Endothelial cell of umbilical vein (primary cell): ENCODE measurements at regions of chr15 and their contacts with region 1.

Region 1: GRCh38 chr15:45705510-45706473 is 71.0 kb downstream of the SQOR start:
- DNase-seq: peak; percentile 90
- H3K4me3 ChIP-seq: peak overlapping the region; percentile 42 to 78 (median 51)
- H3K27ac ChIP-seq: no peak overlapping the region
- H3K4me1 ChIP-seq: peaks cover 4% of the 10 kb centered on the region
- H3K27me3 ChIP-seq: no peaks in the 10 kb centered on the region
- CTCF ChIP-seq: peak; percentile 83 to 87
- POLR2A ChIP-seq: no peak

Region 2: GRCh38 chr15:45268135-45268534 is 437.7 kb before region 1 on chr15:
- CTCF ChIA-PET with region 1: no interaction called
- POLR2A ChIA-PET with region 1: no interaction called
- dilution Hi-C with region 1: no loop called
- intact Hi-C with region 1: no loop called
- DNase-seq: no peak
- H3K4me3 ChIP-seq: no peak overlapping the region
- H3K27ac ChIP-seq: no peak overlapping the region
- H3K4me1 ChIP-seq: no peaks in the 10 kb centered on the region
- H3K27me3 ChIP-seq: no peaks in the 10 kb centered on the region
- CTCF ChIP-seq: peak in 1 of 2 donors; percentile 2
- POLR2A ChIP-seq: no peak

Region 3: DNA sequence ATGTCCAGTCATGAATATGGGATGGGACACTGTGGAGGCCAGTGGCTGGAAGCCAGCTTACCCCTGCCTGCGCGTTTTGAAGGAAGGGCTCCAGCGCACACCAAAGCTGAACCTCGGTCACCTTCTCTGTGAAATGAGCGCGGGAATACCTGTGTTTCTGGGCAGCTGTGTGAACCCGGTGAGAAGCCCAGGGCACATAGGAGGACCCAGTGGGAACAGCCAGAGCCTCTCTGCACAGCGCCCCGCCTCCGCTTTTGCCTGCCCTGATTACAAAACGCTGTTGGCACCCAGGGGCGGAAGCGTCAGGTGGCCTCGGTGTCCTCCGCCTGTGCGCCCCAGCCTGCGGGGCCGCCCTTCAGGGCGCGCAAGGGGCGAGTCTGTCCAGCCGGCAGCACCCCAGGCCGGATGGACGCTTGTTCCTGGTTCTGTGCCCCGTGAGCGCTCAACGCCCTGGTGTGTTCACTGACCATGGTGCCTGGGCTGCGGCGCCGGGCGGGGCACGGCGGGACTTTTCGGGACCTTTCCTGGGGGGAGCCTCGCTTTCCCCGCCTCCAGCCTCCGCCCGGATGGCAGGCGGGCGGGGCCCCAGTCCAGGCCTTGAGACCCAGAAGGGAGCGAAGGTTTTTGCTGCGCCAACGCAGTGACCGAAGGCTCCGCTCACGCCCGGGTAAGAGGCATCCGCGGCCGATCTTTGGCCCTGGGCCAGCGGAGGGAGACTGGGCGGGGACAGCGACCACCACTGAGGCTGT is 71.2 kb before region 1 on chr15 and contains the start of gene SQOR:
- CTCF ChIA-PET with region 1: interaction called, 12 read pairs
- POLR2A ChIA-PET with region 1: no interaction called
- dilution Hi-C with region 1: no loop called
- intact Hi-C with region 1: loop called (anchors 1 kb)
- DNase-seq: peak; percentile 77
- H3K4me3 ChIP-seq: peak within 1 kb of the TSS; percentile 52 to 88 (median 82)
- H3K27ac ChIP-seq: no peak within 1 kb of the TSS
- H3K4me1 ChIP-seq: peaks cover 20% of the 10 kb centered on the region
- H3K27me3 ChIP-seq: no peaks in the 10 kb centered on the region
- CTCF ChIP-seq: no peak
- POLR2A ChIP-seq: peak; percentile 68
- total RNA-seq, gene SQOR: 6.6 and 17.9 TPM in 2 replicates

Region 4: DNA sequence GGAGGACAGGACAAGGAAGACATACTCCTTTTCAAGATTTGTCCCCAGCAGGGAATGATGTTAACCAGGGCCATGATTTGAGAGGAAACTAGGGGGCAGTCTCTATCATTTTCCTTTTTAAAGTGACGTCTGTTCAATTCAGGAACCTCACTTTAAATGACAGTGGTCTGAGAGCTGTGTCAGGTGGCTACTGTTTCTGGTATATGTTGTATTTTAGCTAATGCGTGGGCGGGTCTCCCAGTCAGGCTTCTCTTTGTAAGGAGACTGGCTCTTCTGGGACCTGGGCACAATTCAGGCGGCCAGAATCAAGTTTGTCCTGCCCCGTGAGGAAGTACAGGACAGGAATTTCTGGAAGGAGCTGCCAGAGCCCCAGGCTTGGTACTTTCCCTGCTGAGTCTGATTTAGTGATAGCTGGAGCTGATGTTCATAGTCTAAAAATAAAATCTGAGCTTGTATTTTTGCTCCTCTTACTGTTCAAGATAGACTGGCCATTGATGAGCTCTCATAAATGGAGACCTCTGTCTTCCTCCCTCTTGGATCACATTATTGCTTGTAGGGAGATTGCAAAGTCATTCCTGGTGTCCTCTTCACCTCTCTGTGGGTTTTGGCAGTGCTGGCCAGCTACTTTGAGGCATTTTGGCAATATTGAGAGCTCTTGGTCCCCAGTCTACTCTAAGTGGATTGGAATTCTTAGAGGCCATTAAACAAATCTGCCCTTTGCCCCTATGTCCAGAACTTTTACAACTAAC is 45.4 kb before region 1 on chr15:
- CTCF ChIA-PET with region 1: interaction called, 10 read pairs
- POLR2A ChIA-PET with region 1: no interaction called
- dilution Hi-C with region 1: no loop called
- intact Hi-C with region 1: no loop called
- DNase-seq: no peak
- H3K4me3 ChIP-seq: no peak overlapping the region
- H3K27ac ChIP-seq: no peak overlapping the region
- H3K4me1 ChIP-seq: no peaks in the 10 kb centered on the region
- H3K27me3 ChIP-seq: no peaks in the 10 kb centered on the region
- CTCF ChIP-seq: no peak
- POLR2A ChIP-seq: no peak

Region 5: DNA sequence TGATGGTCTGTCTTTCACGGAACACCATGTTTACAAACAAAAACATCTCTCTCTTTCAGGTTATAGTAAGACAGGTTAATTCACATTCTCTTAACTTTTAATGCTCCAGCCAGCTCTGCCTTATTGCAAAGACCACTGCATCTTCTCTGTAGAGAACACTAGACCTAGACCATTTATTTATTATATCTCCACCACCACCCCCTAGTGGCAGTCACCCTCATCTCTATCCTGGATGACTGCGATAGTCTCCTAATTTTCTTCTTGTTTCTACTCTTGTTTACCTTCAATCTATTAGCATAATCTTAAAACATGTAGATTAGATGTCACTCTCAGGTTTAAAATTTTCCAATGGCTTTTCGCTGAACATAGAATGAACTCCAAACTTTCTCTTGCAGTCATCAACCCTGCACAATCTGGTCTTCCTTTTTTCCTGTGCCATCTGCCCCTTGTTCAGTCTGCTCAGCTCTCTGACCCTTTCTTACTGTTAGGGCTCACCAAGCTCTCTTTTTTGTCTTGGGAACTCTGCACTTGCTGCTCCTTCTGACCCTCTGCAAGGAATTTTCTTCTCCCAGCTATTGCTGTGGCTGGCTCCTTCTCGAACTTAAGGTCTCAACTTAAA is 84.6 kb after region 1 on chr15:
- CTCF ChIA-PET with region 1: interaction called, 45 read pairs
- POLR2A ChIA-PET with region 1: no interaction called
- dilution Hi-C with region 1: no loop called
- intact Hi-C with region 1: loop called (anchors 2 kb)
- DNase-seq: peak; percentile 25
- H3K4me3 ChIP-seq: no peak overlapping the region
- H3K27ac ChIP-seq: no peak overlapping the region
- H3K4me1 ChIP-seq: no peaks in the 10 kb centered on the region
- H3K27me3 ChIP-seq: peaks cover 10 to 12% of the 10 kb centered on the region in 2 experiments
- CTCF ChIP-seq: peak; percentile 31 to 48
- POLR2A ChIP-seq: no peak

Region 6: GRCh38 chr15:45970542-45970941 is 264.8 kb after region 1 on chr15:
- CTCF ChIA-PET with region 1: no interaction called
- POLR2A ChIA-PET with region 1: no interaction called
- dilution Hi-C with region 1: no loop called
- intact Hi-C with region 1: no loop called
- DNase-seq: no peak
- H3K4me3 ChIP-seq: no peak overlapping the region
- H3K27ac ChIP-seq: no peak overlapping the region
- H3K4me1 ChIP-seq: no peaks in the 10 kb centered on the region
- H3K27me3 ChIP-seq: no peaks in the 10 kb centered on the region
- CTCF ChIP-seq: no peak
- POLR2A ChIP-seq: no peak

Region 7: GRCh38 chr15:46091860-46092450 is 386.2 kb after region 1 on chr15:
- CTCF ChIA-PET with region 1: interaction called, 12 read pairs
- POLR2A ChIA-PET with region 1: no interaction called
- dilution Hi-C with region 1: no loop called
- intact Hi-C with region 1: loop called (anchors 2 kb)
- DNase-seq: peak; percentile 30
- H3K4me3 ChIP-seq: no peak overlapping the region
- H3K27ac ChIP-seq: no peak overlapping the region
- H3K4me1 ChIP-seq: peaks cover 38% of the 10 kb centered on the region
- H3K27me3 ChIP-seq: no peaks in the 10 kb centered on the region
- CTCF ChIP-seq: peak; percentile 38 to 60
- POLR2A ChIP-seq: no peak

Region 8: GRCh38 chr15:46312133-46312740 is 606.4 kb after region 1 on chr15:
- CTCF ChIA-PET with region 1: interaction called, 8 read pairs
- POLR2A ChIA-PET with region 1: no interaction called
- dilution Hi-C with region 1: no loop called
- intact Hi-C with region 1: loop called (anchors 2 kb)
- DNase-seq: peak; percentile 71
- H3K4me3 ChIP-seq: no peak overlapping the region
- H3K27ac ChIP-seq: no peak overlapping the region
- H3K4me1 ChIP-seq: no peaks in the 10 kb centered on the region
- H3K27me3 ChIP-seq: peaks cover 0 to 3% of the 10 kb centered on the region in 2 experiments
- CTCF ChIP-seq: peak; percentile 82 to 86
- POLR2A ChIP-seq: no peak